CD8-positive, alpha-beta T cell (primary cell): ENCODE measurements at regions of chr13 and their contacts with region 1.

Region 1: DNA sequence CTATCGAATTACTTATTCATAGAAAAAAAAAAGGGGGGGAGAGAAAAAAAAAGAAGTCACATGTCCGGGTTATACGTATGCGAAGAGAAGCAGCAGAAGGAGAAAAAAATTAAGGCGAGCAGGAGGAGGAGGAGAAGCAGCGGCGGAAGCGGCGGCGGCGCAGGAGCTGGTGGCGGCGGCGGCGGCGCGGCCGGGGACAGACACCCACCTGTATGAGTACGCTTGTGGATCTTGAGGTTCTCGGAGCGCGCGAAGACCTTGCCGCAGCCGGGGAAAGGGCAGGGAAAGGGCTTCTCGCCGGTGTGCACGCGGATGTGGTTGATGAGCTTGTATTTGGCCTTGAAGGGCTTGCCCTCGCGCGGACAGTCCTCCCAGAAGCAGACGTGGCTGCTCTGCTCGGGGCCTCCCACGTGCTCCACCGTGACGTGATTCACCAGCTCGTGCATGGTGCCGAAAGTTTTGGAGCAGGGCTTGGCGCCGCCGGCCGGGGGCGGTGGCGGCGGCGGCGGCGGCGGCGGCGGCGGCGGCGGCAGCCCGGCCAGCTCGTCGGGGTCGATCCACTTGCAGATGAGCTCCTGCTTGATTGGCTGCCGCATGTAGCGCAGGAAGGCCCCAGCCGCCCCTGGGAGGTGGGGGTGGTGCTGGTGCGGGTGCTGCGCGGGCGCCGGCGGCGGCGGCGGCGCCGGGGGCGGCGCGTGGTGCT is 1.5 kb downstream of the ZIC5 start:
- DNase-seq: peak in 5 of 9 experiments; percentile 46 to 63 (median 56)
- ATAC-seq: peak; percentile 57
- H3K4me3 ChIP-seq: peak overlapping the region; percentile 29 to 47
- H3K4me3 Mint-ChIP-seq: peak overlapping the region; percentile 82
- H3K27ac ChIP-seq: no peak overlapping the region
- H3K27ac Mint-ChIP-seq: no peak overlapping the region
- H3K4me1 ChIP-seq: peaks cover 26% of the 10 kb centered on the region
- H3K4me1 Mint-ChIP-seq: peaks cover 25% of the 10 kb centered on the region
- H3K27me3 ChIP-seq: peaks cover 67 to 70% of the 10 kb centered on the region in 2 experiments
- H3K27me3 Mint-ChIP-seq: peaks cover 67% of the 10 kb centered on the region
- CTCF ChIP-seq: no peak

Region 2: GRCh38 chr13:99980201-99980823 is 10.2 kb after region 1 on chr13:
- CTCF ChIA-PET with region 1: interaction called, 4 read pairs
- POLR2A ChIA-PET with region 1: no interaction called
- intact Hi-C with region 1: loop called in 1 of 2 experiments (anchors 1 kb)
- DNase-seq: peak in 7 of 9 experiments; percentile 33 to 74 (median 65)
- ATAC-seq: peak; percentile 84
- H3K4me3 ChIP-seq: peak overlapping the region in 1 of 2 experiments; percentile 36
- H3K4me3 Mint-ChIP-seq: no peak overlapping the region
- H3K27ac ChIP-seq: no peak overlapping the region
- H3K27ac Mint-ChIP-seq: no peak overlapping the region
- H3K4me1 ChIP-seq: peaks cover 25% of the 10 kb centered on the region
- H3K4me1 Mint-ChIP-seq: peaks cover 14% of the 10 kb centered on the region
- H3K27me3 ChIP-seq: peaks cover 66 to 70% of the 10 kb centered on the region in 2 experiments
- H3K27me3 Mint-ChIP-seq: peaks cover 62% of the 10 kb centered on the region
- CTCF ChIP-seq: no peak